ENCODE measurements at regions of chr14 and their contacts with region 1.

Region 1: GRCh38 chr14:66070509-66071319 is 415.5 kb upstream of the CCDC196 start:
- DNase-seq: peak; percentile 18
- ATAC-seq: peak; percentile 94
- H3K4me3 ChIP-seq: no peak overlapping the region
- H3K27ac ChIP-seq: no peak overlapping the region
- H3K4me1 ChIP-seq: no peaks in the 10 kb centered on the region
- H3K27me3 ChIP-seq: peaks cover 0 to 34% of the 10 kb centered on the region in 2 experiments; a peak in 3 of 5 replicates
- CTCF ChIP-seq: peak; percentile 80
- EP300 ChIP-seq: no peak
- POLR2A ChIP-seq: no peak
- RAD21 ChIP-seq: peak; percentile 47; the same call in 1 of the 2 replicates

Region 2: DNA sequence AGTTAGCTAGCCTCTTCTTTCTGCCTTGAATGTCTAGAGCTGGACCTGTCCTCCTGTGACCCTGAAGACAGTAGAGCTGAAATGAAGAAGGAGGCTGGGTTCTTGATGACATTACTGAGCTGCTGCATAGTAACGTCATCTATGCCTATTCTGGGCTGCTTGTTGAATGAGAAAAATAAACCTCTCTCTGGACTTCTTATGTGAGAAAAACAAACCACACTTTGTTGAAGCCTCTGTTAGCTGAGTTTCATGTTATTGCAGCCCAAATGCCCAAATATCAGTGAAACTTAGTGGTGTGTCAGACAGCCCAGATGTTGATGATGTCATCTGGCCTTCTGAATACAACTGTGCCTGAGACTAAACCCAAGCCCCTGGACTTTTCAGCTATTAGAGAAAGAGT is 901.4 kb before region 1 on chr14:
- CTCF ChIA-PET with region 1: interaction called, 6 read pairs
- POLR2A ChIA-PET with region 1: no interaction called
- in situ Hi-C with region 1: loop called (anchors 5 kb)
- intact Hi-C with region 1: no loop called
- DNase-seq: no peak
- ATAC-seq: no peak
- H3K4me3 ChIP-seq: no peak overlapping the region
- H3K27ac ChIP-seq: no peak overlapping the region
- H3K4me1 ChIP-seq: peaks cover 32% of the 10 kb centered on the region
- H3K27me3 ChIP-seq: 0 out of 5 replicates have a peak, but pooled peaks cover 0 to 8% of the 10 kb centered on the region in 2 experiments
- CTCF ChIP-seq: no peak
- EP300 ChIP-seq: no peak
- POLR2A ChIP-seq: no peak
- RAD21 ChIP-seq: no peak

Region 3: GRCh38 chr14:65750906-65751305 is 319.8 kb before region 1 on chr14:
- CTCF ChIA-PET with region 1: no interaction called
- POLR2A ChIA-PET with region 1: no interaction called
- in situ Hi-C with region 1: no loop called
- intact Hi-C with region 1: no loop called
- DNase-seq: no peak
- ATAC-seq: no peak
- H3K4me3 ChIP-seq: no peak overlapping the region
- H3K27ac ChIP-seq: no peak overlapping the region
- H3K4me1 ChIP-seq: peaks cover 36% of the 10 kb centered on the region
- H3K27me3 ChIP-seq: 0 out of 5 replicates have a peak, but pooled peaks cover 0 to under 1% of the 10 kb centered on the region in 2 experiments
- CTCF ChIP-seq: no peak
- EP300 ChIP-seq: no peak
- POLR2A ChIP-seq: no peak
- RAD21 ChIP-seq: no peak

Region 4: DNA sequence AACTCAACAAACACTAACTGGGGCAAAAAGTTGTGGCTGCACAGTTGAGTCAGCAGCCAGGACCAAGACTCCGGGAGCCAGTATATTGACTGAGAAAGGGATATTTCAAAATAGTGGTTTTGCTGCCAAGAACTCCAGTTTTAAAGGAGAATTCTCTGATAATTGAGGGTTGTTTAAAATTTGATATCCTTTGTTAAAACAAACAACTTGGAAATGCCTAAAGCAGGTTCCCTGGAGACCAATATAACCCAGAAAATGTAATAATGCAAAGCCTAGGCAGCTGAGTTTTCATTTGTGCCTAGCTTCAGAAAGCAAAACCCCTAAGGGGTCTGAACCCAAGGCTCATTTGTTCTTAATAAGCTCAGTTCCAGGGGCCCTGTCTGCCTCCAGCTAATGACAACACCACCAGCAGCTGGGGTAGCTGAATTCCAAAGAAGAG is 103.8 kb after region 1 on chr14:
- CTCF ChIA-PET with region 1: no interaction called
- POLR2A ChIA-PET with region 1: no interaction called
- in situ Hi-C with region 1: no loop called
- intact Hi-C with region 1: no loop called
- DNase-seq: no peak
- ATAC-seq: no peak
- H3K4me3 ChIP-seq: no peak overlapping the region
- H3K27ac ChIP-seq: no peak overlapping the region
- H3K4me1 ChIP-seq: no peaks in the 10 kb centered on the region
- H3K27me3 ChIP-seq: no peaks in the 10 kb centered on the region
- CTCF ChIP-seq: no peak
- EP300 ChIP-seq: no peak
- POLR2A ChIP-seq: no peak
- RAD21 ChIP-seq: no peak

Measured in HepG2 (cell line).